Panc1 (cell line): ENCODE measurements at regions of chr9 and their contacts with region 1.

Region 1: GRCh38 chr9:96232539-96233241 is 69.3 kb downstream of the HSD17B3 start:
- DNase-seq: no peak
- ATAC-seq: peak; percentile 94
- H3K4me3 ChIP-seq: no peak overlapping the region
- H3K27ac ChIP-seq: no peak overlapping the region
- H3K4me1 ChIP-seq: no peaks in the 10 kb centered on the region
- H3K27me3 ChIP-seq: no peaks in the 10 kb centered on the region
- CTCF ChIP-seq: peak; percentile 93

Region 2: DNA sequence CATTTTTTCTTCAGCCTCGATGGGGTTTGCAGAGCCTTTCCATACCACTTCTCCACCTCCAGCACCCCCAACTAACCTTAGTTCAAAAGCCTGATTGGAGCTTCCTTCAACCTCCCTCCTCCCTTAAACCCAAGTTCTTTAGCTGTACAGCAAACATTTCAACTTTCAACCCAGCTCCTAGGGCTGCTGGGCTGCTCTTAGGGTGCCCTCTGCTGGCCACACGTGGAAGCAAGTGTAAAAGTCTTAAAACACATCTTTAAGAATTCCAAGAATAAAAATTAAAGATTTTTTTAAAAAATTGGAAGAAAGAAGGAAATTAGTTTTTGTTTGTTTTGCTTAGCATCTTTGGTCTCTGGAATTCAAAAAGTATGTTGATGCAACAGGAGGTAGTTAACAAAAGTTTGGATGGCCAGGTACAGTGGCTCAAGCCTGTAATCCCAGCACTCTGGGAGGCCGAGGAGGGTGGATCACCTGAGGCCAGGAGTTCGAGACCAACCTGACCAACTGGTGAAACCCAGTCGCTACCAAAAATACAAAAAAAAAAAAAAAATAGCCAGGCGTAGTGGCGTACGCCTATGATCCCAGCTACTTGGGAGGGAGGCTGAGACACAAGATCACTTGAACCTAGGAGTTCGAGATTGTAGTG is 84.8 kb after region 1 on chr9:
- CTCF ChIA-PET with region 1: interaction called, 4 read pairs
- POLR2A ChIA-PET with region 1: interaction called, 3 read pairs
- in situ Hi-C with region 1: no loop called
- intact Hi-C with region 1: loop called (anchors 5 kb)
- DNase-seq: no peak
- ATAC-seq: peak; percentile 75
- H3K4me3 ChIP-seq: no peak overlapping the region
- H3K27ac ChIP-seq: no peak overlapping the region
- H3K4me1 ChIP-seq: no peaks in the 10 kb centered on the region
- H3K27me3 ChIP-seq: no peaks in the 10 kb centered on the region
- CTCF ChIP-seq: peak; percentile 87